ENCODE measurements at regions of chr10 and their contacts with region 1.

Region 1: GRCh38 chr10:121994390-121994961 is 5.5 kb downstream of the TACC2 start:
- DNase-seq: peak; percentile 64
- H3K4me3 ChIP-seq: peak overlapping the region in 1 of 4 donors; percentile 14
- H3K27ac ChIP-seq: peak overlapping the region; percentile 83 to 86 (median 84)
- H3K4me1 ChIP-seq: peaks cover 16 to 42% (median 36%) of the 10 kb centered on the region in 4 donors
- H3K27me3 ChIP-seq: no peaks in the 10 kb centered on the region
- CTCF ChIP-seq: peak in 1 of 5 experiments; percentile 19
- EP300 ChIP-seq: no peak
- POLR2A ChIP-seq: peak; percentile 45

Region 2: DNA sequence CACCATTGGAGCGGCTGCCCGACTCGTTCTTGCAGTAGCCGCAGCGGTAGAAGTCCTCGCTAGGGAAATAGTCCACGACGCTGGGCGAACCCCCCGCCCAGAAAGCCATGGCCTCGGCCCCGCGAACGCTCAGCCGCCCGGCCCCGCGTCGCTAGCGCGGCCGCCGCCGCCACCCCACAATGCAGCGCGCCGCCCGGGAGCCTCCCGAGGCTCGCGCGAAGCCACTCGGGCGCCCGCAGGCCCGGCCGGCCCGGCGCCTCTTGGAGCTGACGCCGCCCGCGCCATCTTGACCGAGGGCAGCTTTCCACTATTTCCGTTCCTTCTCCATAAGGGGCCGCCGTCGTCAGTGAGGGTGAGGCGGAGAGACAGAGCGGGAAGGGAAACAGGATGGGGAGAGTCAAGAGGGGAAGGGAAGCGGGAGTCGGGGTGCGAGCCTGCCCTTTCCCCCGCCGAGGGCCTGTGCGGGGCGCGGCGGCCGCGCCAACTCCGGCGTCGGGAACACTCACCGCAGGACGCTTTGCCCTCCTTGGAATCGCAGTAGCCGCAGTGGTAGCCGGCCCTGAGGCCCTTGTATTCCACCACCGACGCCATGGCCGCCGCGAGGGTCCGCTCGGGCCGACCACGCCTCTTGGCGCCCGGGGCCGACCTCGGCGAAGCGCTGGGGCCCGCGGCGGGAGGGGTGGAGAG is 66.5 kb before region 1 on chr10 and contains the start of gene ATE1:
- in situ Hi-C with region 1: no loop called
- intact Hi-C with region 1: loop called (anchors 10 kb)
- DNase-seq: peak; percentile 93
- H3K4me3 ChIP-seq: peak within 1 kb of the TSS; percentile 61 to 100 (median 86)
- H3K27ac ChIP-seq: peak within 1 kb of the TSS; percentile 96 to 100 (median 99)
- H3K4me1 ChIP-seq: peaks cover 6 to 44% (median 32%) of the 10 kb centered on the region in 4 donors
- H3K27me3 ChIP-seq: no peaks in the 10 kb centered on the region
- CTCF ChIP-seq: no peak
- EP300 ChIP-seq: no peak
- POLR2A ChIP-seq: peak; percentile 91
- total RNA-seq, gene ATE1: 25.3 to 1,446 (median 31.4) TPM

Region 3: DNA sequence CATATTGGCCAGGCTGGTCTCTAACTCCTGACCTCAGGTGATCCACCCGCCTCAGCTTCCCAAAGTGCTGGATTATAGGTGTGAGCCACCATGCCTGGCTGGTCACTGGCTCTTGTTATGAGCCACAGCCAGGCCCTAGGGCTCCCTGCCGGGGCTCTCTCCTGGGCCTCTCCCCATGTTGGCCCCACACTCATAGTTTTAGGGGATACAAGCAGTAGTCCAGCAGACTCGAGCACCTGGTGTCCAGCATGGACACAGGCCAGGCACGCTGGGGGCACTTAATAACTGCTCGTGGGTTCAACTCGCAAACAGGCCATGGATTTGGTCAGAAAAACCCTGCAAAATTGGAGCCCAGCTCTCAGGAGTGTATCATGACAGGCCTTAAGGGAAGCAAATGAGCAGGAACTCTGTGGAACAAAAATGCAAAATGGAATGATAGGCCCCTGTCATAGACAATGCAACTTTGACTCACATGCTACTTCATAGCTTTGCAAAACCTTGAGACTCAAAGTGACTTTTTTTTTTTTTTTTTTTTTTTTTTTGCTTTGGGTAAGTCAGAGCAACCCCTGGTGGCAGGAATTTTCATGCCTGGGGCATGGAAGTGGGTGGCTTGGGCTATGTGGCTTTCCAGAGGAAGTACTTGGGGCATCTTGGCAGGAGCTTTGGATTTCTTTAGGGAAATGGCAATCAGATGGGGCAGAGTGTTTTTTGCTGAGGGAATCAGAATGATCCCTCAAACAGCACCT is 56.9 kb after region 1 on chr10:
- in situ Hi-C with region 1: no loop called
- intact Hi-C with region 1: no loop called
- DNase-seq: peak; percentile 75
- H3K4me3 ChIP-seq: no peak overlapping the region
- H3K27ac ChIP-seq: peak overlapping the region; percentile 52 to 75 (median 66)
- H3K4me1 ChIP-seq: peaks cover 0 to 20% (median 6%) of the 10 kb centered on the region in 4 donors
- H3K27me3 ChIP-seq: no peaks in the 10 kb centered on the region
- CTCF ChIP-seq: peak; percentile 63 to 73 (median 68)
- EP300 ChIP-seq: no peak
- POLR2A ChIP-seq: no peak

Region 4: DNA sequence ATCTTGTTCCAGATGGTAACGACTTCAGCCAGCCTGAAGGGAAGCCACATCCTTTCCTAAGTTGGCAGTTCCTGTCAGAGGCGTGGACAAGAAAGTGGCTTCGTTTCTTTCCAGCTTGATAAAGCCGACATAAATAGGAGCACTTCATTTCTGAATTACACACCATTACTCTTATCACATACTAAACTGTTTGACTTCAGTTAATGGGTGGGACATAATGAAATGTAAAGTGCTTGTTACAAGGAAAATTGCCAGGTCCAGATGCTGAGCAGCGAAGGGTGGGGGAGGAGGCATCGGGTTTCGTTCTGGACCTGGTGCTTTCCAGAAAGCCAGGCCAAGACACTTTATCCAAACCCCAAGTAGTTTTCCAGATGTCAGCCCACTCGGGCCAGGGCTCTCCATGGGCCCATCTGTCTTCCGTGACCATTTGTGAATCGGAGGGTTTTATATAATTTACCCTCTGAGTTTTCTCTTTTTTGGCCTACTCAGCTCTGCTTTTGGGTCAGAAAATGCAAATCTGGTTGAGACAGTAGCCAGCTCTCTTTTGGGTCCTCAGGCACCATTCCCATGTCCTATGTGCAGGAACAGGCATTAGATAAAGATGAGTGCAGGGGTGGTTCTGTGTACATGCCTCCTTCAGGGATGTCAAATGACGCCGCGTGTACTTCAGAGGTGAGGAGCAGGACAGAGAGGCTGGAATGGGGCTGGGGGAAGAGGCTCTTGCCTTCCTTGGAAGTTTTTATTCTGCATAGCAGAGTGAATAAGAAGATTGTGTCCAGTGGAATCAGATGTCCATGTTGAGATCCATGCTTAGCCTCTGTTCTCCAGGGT is 84.7 kb after region 1 on chr10:
- in situ Hi-C with region 1: no loop called
- intact Hi-C with region 1: no loop called
- DNase-seq: no peak
- H3K4me3 ChIP-seq: no peak overlapping the region
- H3K27ac ChIP-seq: peak overlapping the region; percentile 20 to 39 (median 27)
- H3K4me1 ChIP-seq: peaks cover 0 to 7% (median 0%) of the 10 kb centered on the region in 4 donors
- H3K27me3 ChIP-seq: no peaks in the 10 kb centered on the region
- CTCF ChIP-seq: no peak
- EP300 ChIP-seq: no peak
- POLR2A ChIP-seq: no peak

Region 5: DNA sequence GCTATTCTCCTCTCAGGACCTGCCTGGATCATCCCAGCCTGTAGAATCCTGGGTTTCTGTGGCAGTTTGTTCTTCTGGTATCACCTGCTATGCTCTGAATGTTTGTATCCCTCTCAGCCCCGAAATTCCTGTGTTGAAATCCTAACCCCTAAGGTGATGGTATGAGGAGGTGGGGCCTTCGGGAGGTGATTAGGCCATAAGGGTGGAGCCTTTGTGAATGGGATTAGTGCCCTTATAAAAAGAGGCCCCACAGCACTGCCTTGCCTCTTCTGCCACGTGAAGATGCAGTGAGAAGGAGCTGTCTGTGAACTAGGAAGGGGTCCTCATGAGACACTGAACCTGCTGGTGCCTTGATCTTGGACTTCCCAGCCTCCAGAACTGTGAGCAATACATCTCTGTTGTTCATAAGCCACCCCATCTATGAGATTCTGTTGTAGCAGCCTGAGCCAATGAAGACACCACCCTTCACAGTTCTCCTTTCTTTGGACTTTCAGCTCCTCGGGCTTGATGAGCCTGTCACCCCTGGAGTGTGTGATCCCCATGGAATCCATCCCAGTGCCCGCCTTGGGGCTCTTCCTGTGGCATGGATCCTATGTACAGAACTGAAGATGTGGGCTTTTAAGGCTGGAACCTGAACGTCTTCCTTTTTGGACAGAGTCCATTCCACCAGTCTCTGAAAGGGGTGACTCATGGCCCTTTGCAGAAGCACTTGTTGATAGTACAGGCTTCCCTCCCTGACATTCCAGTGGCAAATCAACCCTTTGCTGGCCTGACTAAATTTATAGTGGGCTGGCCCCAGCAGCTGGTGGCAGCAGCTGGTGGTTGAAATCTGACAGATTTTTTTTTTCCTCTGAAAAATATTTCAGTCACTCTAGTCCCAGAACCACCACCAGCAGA is 132.5 kb after region 1 on chr10:
- in situ Hi-C with region 1: no loop called
- intact Hi-C with region 1: no loop called
- DNase-seq: no peak
- H3K4me3 ChIP-seq: peak overlapping the region in 1 of 4 donors; percentile 2
- H3K27ac ChIP-seq: peak overlapping the region; percentile 64 to 87 (median 82)
- H3K4me1 ChIP-seq: peaks cover 15 to 33% (median 18%) of the 10 kb centered on the region in 4 donors
- H3K27me3 ChIP-seq: no peaks in the 10 kb centered on the region
- CTCF ChIP-seq: no peak
- EP300 ChIP-seq: no peak
- POLR2A ChIP-seq: no peak